ENCODE measurements at regions of chr4 and their contacts with region 1.

Region 1: DNA sequence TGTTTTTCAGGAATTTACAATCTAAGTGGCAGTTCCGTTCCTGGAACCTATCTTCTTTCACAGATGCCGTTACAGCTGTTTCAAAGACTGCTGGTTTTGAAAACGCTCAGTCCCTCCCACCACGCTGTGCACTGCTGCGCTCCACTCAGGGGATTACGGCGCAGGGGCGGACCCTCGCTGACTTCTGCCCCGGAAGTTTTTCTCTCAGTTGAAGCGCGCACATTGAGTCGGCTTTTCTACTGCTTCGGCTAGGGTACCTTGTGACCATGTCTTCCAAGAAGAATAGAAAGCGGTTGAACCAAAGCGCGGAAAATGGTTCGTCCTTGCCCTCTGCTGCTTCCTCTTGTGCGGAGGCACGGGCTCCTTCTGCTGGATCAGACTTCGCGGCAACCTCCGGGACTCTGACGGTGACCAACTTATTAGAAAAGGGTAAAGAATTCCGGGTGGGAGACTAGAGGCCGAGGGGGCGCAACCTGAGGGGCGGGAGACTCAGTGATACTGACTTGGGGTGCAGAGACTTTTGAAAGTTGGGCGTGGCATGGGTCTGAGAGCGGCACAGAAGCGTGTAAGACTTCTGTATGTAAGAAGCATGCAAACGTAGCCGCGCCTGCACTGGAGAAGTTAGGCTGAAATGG is 597 bp upstream of the NUDT6 start:
- DNase-seq: peak; percentile 87
- ATAC-seq: peak; percentile 96
- H3K4me3 ChIP-seq: peak overlapping the region; percentile 68 to 92 (median 85)
- H3K4me3 Mint-ChIP-seq: peak overlapping the region; percentile 96
- H3K27ac ChIP-seq: peak overlapping the region; percentile 54 to 76
- H3K27ac Mint-ChIP-seq: peak overlapping the region; percentile 91
- H3K4me1 ChIP-seq: peaks cover 13 to 16% of the 10 kb centered on the region in 2 donors
- H3K4me1 Mint-ChIP-seq: peaks cover 11% of the 10 kb centered on the region
- H3K27me3 ChIP-seq: no peaks in the 10 kb centered on the region
- H3K27me3 Mint-ChIP-seq: no peaks in the 10 kb centered on the region
- CTCF ChIP-seq: no peak

Region 2: GRCh38 chr4:121823505-121824170 is 1099.4 kb before region 1 on chr4 and contains the start of gene CCNA2:
- CTCF ChIA-PET with region 1: no interaction called
- POLR2A ChIA-PET with region 1: no interaction called
- intact Hi-C with region 1: loop called (anchors 5 kb)
- DNase-seq: peak; percentile 94
- ATAC-seq: peak; percentile 99
- H3K4me3 ChIP-seq: peak within 1 kb of the TSS; percentile 46 to 96 (median 74)
- H3K4me3 Mint-ChIP-seq: peak within 1 kb of the TSS; percentile 90
- H3K27ac ChIP-seq: peak within 1 kb of the TSS; percentile 62 to 82
- H3K27ac Mint-ChIP-seq: peak within 1 kb of the TSS; percentile 87
- H3K4me1 ChIP-seq: peaks cover 8 to 10% of the 10 kb centered on the region in 2 donors
- H3K4me1 Mint-ChIP-seq: peaks cover 16% of the 10 kb centered on the region
- H3K27me3 ChIP-seq: no peaks in the 10 kb centered on the region
- H3K27me3 Mint-ChIP-seq: no peaks in the 10 kb centered on the region
- CTCF ChIP-seq: no peak
- total RNA-seq, gene CCNA2: 0.94 and 1.8 TPM in 2 replicates

Region 3: GRCh38 chr4:122151982-122152710 is 770.8 kb before region 1 on chr4 and contains the start of gene BLTP1:
- CTCF ChIA-PET with region 1: no interaction called
- POLR2A ChIA-PET with region 1: no interaction called
- intact Hi-C with region 1: loop called (anchors 2 kb)
- DNase-seq: peak; percentile 91
- ATAC-seq: peak; percentile 96
- H3K4me3 ChIP-seq: peak within 1 kb of the TSS; percentile 73 to 89 (median 86)
- H3K4me3 Mint-ChIP-seq: peak within 1 kb of the TSS; percentile 92
- H3K27ac ChIP-seq: peak within 1 kb of the TSS; percentile 73 to 87
- H3K27ac Mint-ChIP-seq: peak within 1 kb of the TSS; percentile 91
- H3K4me1 ChIP-seq: peaks cover 20 to 25% of the 10 kb centered on the region in 2 donors
- H3K4me1 Mint-ChIP-seq: peaks cover 52% of the 10 kb centered on the region
- H3K27me3 ChIP-seq: no peaks in the 10 kb centered on the region
- H3K27me3 Mint-ChIP-seq: peaks cover 3% of the 10 kb centered on the region
- CTCF ChIP-seq: no peak
- total RNA-seq, gene BLTP1: 86.3 and 96.8 TPM in 2 replicates

Region 4: DNA sequence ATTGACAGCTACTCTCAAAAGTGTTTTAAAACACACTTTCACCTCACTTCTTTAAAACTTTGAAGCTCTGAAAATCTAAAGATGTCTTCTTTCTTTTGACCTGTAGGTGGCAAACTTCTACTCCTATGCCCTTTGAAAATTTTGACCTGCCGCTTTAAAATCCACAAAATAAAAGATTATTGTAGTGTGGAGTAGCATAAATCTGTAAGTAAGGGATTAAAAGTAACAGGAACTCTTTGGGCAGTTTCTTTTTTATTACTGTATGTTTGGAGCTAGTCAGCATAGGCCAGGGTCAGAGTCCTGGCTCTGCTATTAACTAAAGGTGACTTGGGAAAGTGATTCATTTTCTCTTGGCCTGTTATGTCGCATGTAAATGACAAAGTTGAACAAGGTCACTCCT is 165.0 kb before region 1 on chr4:
- CTCF ChIA-PET with region 1: interaction called, 71 read pairs
- POLR2A ChIA-PET with region 1: no interaction called
- intact Hi-C with region 1: no loop called
- DNase-seq: peak; percentile 53
- ATAC-seq: no peak
- H3K4me3 ChIP-seq: no peak overlapping the region
- H3K4me3 Mint-ChIP-seq: no peak overlapping the region
- H3K27ac ChIP-seq: no peak overlapping the region
- H3K27ac Mint-ChIP-seq: no peak overlapping the region
- H3K4me1 ChIP-seq: peaks cover 8 to 11% of the 10 kb centered on the region in 2 donors
- H3K4me1 Mint-ChIP-seq: peaks cover 15% of the 10 kb centered on the region
- H3K27me3 ChIP-seq: no peaks in the 10 kb centered on the region
- H3K27me3 Mint-ChIP-seq: peaks cover 22% of the 10 kb centered on the region
- CTCF ChIP-seq: peak; percentile 96

Region 5: DNA sequence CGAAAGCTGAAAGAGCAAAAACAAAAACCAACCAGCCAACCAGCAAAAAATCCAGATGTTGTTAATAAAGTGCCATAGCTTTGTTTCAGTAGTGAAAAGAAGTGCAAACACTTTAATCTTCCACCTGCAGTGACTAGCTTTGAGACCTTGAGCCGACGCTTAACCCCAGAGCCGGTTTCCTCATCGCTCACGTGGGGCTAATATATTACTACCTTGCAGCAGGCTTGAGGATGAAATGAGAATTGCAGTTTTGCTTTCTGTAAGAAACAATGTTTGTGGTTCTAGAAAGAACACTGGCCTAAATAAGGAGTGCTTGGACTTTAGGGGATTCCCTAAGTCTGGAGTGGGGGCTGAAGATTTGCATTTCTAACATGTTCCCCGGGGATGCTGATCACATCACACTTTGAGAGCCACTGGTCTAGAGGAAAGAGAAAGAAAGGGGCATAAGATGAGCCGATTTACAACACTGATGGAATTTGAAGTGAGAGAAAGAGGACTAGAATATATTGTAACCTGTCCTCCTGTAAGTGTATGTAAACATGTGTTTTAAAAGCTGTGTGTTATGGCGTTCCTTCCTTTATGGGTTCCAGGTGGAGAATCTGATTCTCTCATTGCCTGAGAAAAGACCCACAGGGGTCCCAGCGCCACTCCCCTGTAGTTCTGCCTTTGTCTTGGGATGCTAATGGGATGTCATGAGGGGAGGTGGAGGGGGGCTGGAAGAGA is 95.0 kb before region 1 on chr4:
- CTCF ChIA-PET with region 1: no interaction called
- POLR2A ChIA-PET with region 1: no interaction called
- intact Hi-C with region 1: loop called (anchors 5 kb)
- DNase-seq: peak; percentile 67
- ATAC-seq: peak; percentile 59
- H3K4me3 ChIP-seq: peak overlapping the region; percentile 47 to 73 (median 58)
- H3K4me3 Mint-ChIP-seq: peak overlapping the region; percentile 87
- H3K27ac ChIP-seq: no peak overlapping the region
- H3K27ac Mint-ChIP-seq: peak overlapping the region; percentile 47
- H3K4me1 ChIP-seq: peaks cover 17 to 18% of the 10 kb centered on the region in 2 donors
- H3K4me1 Mint-ChIP-seq: peaks cover 19% of the 10 kb centered on the region
- H3K27me3 ChIP-seq: peaks cover 3 to 55% (median 43%) of the 10 kb centered on the region in 4 experiments
- H3K27me3 Mint-ChIP-seq: peaks cover 80% of the 10 kb centered on the region
- CTCF ChIP-seq: peak; percentile 17

Measured in B cell (primary cell).